Activated CD4-positive, alpha-beta memory T cell treated with anti-CD3 and anti-CD28 coated beads for 36 hours (primary cell): ENCODE measurements at regions of chr9 and their contacts with region 1.

Region 1: GRCh38 chr9:123997665-123998277 is 13.8 kb upstream of the LHX2 start:
- DNase-seq: peak; percentile 58
- H3K4me3 Mint-ChIP-seq: peak overlapping the region; percentile 23
- H3K27ac Mint-ChIP-seq: no peak overlapping the region
- H3K4me1 Mint-ChIP-seq: peaks cover 37% of the 10 kb centered on the region
- H3K27me3 Mint-ChIP-seq: peaks cover 70% of the 10 kb centered on the region

Region 2: DNA sequence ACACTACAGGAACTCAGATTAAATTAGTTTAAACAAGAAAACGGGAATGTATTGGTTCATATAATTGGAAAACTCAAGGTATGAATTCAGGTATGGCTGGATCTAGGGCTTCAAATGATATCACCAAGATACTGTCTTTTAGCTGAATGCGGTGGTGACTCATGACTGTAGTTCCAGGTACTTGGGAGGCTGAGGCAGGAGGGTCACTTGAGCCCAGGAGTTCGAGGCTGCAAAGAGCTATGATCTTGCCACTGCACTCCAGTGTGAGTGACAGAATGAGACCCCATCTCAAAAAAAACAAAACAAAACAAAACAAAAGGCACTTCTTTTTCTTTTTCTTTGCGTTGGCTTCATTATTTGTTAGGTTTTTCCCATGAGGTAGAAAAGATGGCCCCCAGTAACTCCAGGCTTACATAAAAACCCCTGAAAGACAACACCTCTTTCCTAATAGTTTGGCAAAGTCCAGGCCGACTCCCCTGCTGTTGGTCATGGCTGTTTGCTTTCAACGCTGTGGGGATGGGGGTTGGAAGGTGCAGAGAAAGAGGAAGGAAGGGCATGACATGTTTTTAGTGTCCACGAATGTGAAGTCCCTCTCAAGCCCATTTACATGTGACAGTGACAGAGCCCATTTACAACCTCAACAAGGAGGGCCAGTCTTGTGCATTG is 681.6 kb before region 1 on chr9:
- CTCF ChIA-PET with region 1: no interaction called
- POLR2A ChIA-PET with region 1: no interaction called
- intact Hi-C with region 1: no loop called
- DNase-seq: no peak
- H3K4me3 Mint-ChIP-seq: no peak overlapping the region
- H3K27ac Mint-ChIP-seq: no peak overlapping the region
- H3K4me1 Mint-ChIP-seq: peaks cover under 1% of the 10 kb centered on the region
- H3K27me3 Mint-ChIP-seq: no peaks in the 10 kb centered on the region

Region 3: DNA sequence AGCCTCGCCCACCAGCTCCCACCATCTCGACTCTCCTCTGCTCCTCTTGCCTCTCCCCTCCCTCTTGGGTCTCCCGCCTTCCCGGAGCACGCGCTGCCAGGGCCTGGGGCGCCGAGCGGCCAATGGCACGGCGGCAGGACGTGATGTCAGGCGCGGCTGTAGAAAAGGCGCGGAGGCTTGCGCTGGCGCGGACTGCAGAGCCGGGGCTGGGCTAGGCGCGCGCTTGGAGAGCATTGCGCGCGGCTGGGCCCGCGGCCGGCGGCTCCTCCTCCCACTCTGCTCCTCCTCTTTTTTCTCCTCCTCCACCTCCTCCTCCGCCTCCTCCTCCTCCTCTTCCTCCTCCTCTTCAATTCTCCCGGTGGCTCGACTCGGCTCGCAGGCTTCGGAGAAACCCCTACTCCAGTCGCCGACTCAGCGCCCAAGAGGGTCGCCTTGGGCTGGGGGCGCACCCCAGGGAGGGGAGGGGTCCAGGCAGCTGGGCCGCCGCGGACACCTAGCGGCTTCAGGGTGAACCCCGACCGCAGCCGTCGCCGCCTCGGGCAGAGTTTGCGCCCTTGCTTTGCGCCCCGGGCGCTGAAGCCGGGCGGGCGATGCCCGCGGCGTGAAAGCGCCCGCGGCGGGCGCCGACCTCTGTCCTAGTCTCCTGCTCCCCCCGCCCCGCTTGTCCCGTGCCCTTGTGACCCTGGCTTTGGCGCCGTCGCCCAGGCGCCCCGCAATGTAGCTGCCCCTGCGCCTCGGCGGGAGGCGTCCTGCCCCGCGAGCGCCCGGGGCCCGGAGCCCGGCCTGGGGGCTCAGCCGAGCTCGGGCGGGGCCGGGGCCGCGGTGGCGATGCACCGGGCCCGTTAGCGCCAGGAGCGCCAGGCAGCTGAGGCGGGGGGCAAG is 13.9 kb after region 1 on chr9 and contains the start of gene LHX2:
- CTCF ChIA-PET with region 1: no interaction called
- POLR2A ChIA-PET with region 1: no interaction called
- intact Hi-C with region 1: loop called (anchors 2 kb)
- DNase-seq: peak; percentile 70
- H3K4me3 Mint-ChIP-seq: no peak within 1 kb of the TSS
- H3K27ac Mint-ChIP-seq: no peak within 1 kb of the TSS
- H3K4me1 Mint-ChIP-seq: peaks cover 43% of the 10 kb centered on the region
- H3K27me3 Mint-ChIP-seq: peaks cover 69% of the 10 kb centered on the region
- total RNA-seq, gene LHX2: not detected

Region 4: GRCh38 chr9:124017929-124018729 is 20.4 kb after region 1 on chr9:
- CTCF ChIA-PET with region 1: no interaction called
- POLR2A ChIA-PET with region 1: no interaction called
- intact Hi-C with region 1: loop called (anchors 2 kb)
- DNase-seq: no peak
- H3K4me3 Mint-ChIP-seq: no peak overlapping the region
- H3K27ac Mint-ChIP-seq: no peak overlapping the region
- H3K4me1 Mint-ChIP-seq: peaks cover 30% of the 10 kb centered on the region
- H3K27me3 Mint-ChIP-seq: peaks cover 82% of the 10 kb centered on the region

Region 5: DNA sequence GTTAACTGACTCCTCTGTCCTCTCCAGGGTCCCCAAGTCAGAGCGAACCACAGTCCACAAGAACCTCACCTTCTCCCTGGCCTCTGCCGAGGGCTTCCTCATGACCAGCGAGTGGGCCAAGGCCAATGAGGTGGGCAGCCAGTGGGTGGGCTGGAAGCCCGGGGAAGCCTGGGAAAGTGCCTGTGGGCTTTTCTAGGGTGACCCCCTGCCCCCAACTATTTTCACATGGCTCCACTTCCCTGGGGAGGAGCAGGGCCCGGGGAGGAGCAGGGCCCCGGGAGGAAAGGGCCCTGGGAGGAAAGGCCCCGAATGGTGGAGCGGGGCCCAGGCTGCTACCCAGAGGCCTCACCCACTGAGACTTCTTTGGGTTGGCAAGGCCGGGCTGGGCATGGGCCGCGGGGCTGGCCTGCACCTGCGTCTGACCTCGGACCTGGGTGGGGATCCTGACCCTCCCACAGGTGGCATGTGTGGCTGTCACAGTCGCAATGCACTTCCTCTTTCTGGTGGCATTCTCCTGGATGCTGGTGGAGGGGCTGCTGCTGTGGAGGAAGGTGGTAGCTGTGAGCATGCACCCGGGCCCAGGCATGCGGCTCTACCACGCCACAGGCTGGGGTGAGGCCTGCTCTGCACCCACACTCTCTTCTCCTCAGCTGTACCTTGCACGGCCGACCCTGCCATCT is 470.4 kb after region 1 on chr9:
- CTCF ChIA-PET with region 1: no interaction called
- POLR2A ChIA-PET with region 1: no interaction called
- intact Hi-C with region 1: no loop called
- DNase-seq: no peak
- H3K4me3 Mint-ChIP-seq: no peak overlapping the region
- H3K27ac Mint-ChIP-seq: no peak overlapping the region
- H3K4me1 Mint-ChIP-seq: no peaks in the 10 kb centered on the region
- H3K27me3 Mint-ChIP-seq: peaks cover 5% of the 10 kb centered on the region